Calu3 (cell line): ENCODE measurements at regions of chr2 and their contacts with region 1.

Region 1: GRCh38 chr2:6526093-6526824 is 339.4 kb downstream of the CMPK2 start:
- DNase-seq: peak; percentile 46
- H3K4me3 Mint-ChIP-seq: no peak overlapping the region
- H3K27ac Mint-ChIP-seq: no peak overlapping the region
- H3K4me1 Mint-ChIP-seq: no peaks in the 10 kb centered on the region
- H3K27me3 Mint-ChIP-seq: no peaks in the 10 kb centered on the region
- CTCF ChIP-seq: no peak

Region 2: GRCh38 chr2:6352906-6353515 is 173.2 kb before region 1 on chr2:
- CTCF ChIA-PET with region 1: no interaction called
- intact Hi-C with region 1: loop called (anchors 2 kb)
- DNase-seq: peak; percentile 77
- H3K4me3 Mint-ChIP-seq: no peak overlapping the region
- H3K27ac Mint-ChIP-seq: no peak overlapping the region
- H3K4me1 Mint-ChIP-seq: no peaks in the 10 kb centered on the region
- H3K27me3 Mint-ChIP-seq: no peaks in the 10 kb centered on the region
- CTCF ChIP-seq: peak; percentile 51

Region 3: GRCh38 chr2:6773007-6773693 is 246.9 kb after region 1 on chr2:
- CTCF ChIA-PET with region 1: no interaction called
- intact Hi-C with region 1: loop called (anchors 1 kb)
- DNase-seq: peak; percentile 86
- H3K4me3 Mint-ChIP-seq: peak overlapping the region; percentile 39
- H3K27ac Mint-ChIP-seq: no peak overlapping the region
- H3K4me1 Mint-ChIP-seq: no peaks in the 10 kb centered on the region
- H3K27me3 Mint-ChIP-seq: peaks cover 42% of the 10 kb centered on the region
- CTCF ChIP-seq: peak; percentile 94